Heart right ventricle (tissue), 16 donors: ENCODE measurements at regions of chr16 and their contacts with region 1.

Region 1: DNA sequence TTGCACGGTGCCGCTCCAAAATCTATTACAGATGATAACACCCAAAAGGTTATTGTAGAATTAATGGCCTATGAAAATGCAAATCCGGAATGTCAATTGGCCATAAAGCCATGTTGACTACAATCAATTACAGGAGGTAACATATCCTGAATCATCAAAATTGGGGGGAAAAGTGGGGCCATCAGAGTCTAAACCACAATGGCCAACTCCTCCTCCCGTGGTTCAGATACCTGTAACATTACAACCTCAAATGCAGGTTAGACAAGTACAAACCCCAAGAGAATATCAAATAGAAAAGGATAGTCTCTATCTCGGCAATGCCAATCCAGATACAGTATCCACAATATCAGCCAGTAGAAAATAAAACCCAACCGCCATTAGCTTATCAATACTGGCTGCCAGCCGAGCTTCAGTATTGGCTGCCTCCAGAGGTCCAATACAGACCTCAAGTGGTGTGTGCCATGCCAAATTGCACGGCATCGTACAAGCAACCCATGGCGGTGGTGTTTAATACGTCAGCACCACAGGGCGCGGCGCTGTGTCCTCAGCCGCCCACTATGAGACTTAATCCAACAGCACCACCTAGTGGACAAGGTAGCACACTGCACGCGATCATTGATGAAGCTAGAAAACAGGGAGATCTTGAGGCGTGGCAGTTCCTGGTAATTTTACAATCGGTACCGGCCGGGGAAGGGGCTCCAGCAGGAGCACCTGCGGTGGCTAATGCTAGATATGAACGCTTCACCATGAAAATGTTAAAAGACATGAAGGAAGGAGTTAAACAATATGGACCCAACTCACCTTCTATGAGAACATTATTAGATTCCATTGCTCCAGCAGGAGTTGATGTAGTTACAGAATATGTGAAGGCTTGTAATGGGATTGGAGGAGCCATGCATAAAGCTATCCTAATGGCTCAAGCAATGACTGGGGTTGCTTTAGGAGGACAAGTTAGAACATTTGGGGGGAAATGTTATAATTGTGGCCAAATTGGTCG is 15.2 kb downstream of the FLYWCH1 start:
- DNase-seq: peak; percentile 82 to 84
- ATAC-seq: peak; percentile 80 to 93 (median 89)
- H3K4me3 ChIP-seq: peak overlapping the region in 6 of 10 donors; percentile 22 to 33 (median 30)
- H3K27ac ChIP-seq: no peak overlapping the region
- H3K4me1 ChIP-seq: peaks cover 0 to 11% (median 9%) of the 10 kb centered on the region in 9 donors
- H3K27me3 ChIP-seq: no peaks in the 10 kb centered on the region
- CTCF ChIP-seq: peak; percentile 93 to 99 (median 95)

Region 2: DNA sequence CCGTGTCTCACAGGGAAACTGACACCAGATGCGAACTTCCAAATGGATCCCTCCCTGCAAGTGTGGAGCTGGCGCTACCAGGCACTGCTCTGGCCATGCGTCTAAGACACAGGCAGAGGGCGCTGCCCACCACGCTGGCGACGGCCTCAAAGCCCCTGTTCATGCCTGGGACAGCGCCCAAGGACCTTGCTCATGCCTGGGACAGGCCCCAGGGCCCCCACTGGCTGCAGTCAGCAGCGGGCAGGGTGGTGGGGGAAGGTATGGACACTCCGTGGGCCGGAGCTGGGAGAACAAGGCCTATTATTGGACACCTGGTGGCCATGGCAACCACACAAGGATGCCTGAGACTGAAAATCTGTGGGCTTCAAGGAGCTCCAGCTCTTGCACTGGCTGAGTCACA is 88.0 kb before region 1 on chr16:
- intact Hi-C with region 1: loop called in 1 of 10 experiments (anchors 10 kb)
- DNase-seq: peak; percentile 44 to 56
- ATAC-seq: peak in 7 of 8 donors; percentile 74 to 87 (median 79)
- H3K4me3 ChIP-seq: no peak overlapping the region
- H3K27ac ChIP-seq: no peak overlapping the region
- H3K4me1 ChIP-seq: peaks cover 7 to 35% (median 14%) of the 10 kb centered on the region in 9 donors
- H3K27me3 ChIP-seq: peaks cover 0 to 13% (median 0%) of the 10 kb centered on the region in 7 donors
- CTCF ChIP-seq: peak; percentile 22 to 89 (median 75)

Region 3: DNA sequence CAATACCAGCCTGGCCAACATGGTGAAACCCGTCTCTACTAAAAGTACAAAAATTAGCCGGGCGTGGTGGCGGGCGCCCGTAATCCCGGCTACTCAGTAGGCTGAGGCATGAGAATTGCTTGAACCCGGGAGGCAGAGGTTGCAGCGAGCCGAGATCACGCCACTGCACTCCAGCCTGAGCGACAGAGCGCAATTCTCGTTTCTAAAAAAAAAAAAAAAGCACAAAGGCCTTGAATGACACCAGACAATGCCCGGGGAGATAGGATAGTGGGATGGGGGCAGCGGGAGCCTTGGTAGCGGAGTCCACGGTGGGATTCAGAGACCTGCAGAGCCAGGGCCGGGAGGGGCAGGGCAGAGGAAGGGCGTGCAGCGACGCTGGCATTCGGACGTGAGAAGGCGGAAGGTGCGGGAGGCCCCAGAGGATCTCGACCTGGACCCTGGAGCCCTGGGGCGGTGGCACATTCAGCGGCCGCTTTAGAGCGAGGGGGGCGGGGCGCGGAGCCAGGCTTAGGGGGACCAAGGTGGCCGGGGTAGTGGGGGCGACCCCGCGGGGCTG is 45.0 kb before region 1 on chr16:
- intact Hi-C with region 1: no loop called
- DNase-seq: peak in 1 of 2 donors; percentile 40
- ATAC-seq: peak in 6 of 8 donors; percentile 1 to 39 (median 6)
- H3K4me3 ChIP-seq: peak overlapping the region; percentile 42 to 99 (median 93)
- H3K27ac ChIP-seq: peak overlapping the region; percentile 76 to 99 (median 98)
- H3K4me1 ChIP-seq: peaks cover 3 to 19% (median 12%) of the 10 kb centered on the region in 9 donors
- H3K27me3 ChIP-seq: no peaks in the 10 kb centered on the region
- CTCF ChIP-seq: no peak

Region 4: GRCh38 chr16:2990891-2991290 is 63.9 kb after region 1 on chr16:
- intact Hi-C with region 1: no loop called
- DNase-seq: no peak
- ATAC-seq: no peak
- H3K4me3 ChIP-seq: no peak overlapping the region
- H3K27ac ChIP-seq: no peak overlapping the region
- H3K4me1 ChIP-seq: peaks cover 0 to 6% (median 0%) of the 10 kb centered on the region in 9 donors
- H3K27me3 ChIP-seq: peaks cover 0 to 32% (median 11%) of the 10 kb centered on the region in 7 donors
- CTCF ChIP-seq: no peak